Activated CD4-positive, alpha-beta memory T cell treated with anti-CD3 and anti-CD28 coated beads for 36 hours (primary cell): ENCODE measurements at regions of chr6 and their contacts with region 1.

Region 1: GRCh38 chr6:16420715-16421461 is 182.5 kb downstream of the GMPR start:
- DNase-seq: peak; percentile 74
- H3K4me3 Mint-ChIP-seq: peak overlapping the region; percentile 62
- H3K27ac Mint-ChIP-seq: peak overlapping the region; percentile 96
- H3K4me1 Mint-ChIP-seq: peaks cover 69% of the 10 kb centered on the region
- H3K27me3 Mint-ChIP-seq: no peaks in the 10 kb centered on the region

Region 2: DNA sequence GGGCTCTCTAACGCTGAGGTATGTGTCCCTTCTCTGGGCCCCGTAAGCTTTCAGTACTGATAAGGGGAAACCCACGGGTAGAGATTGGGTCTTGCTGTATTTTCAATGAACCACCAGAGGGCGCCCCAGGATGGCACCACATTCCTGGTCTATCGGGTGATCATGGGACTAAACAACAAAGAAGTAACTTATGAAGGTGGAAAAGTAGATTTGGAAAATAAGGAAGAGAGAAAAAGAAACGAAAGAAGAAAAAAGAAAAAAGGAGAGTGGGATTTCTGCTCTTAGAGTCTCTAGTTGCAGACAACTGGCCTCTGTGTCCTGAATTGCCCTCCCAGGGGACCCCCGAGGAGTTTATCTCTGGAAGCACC is 88.7 kb before region 1 on chr6:
- CTCF ChIA-PET with region 1: interaction called, 5 read pairs
- POLR2A ChIA-PET with region 1: no interaction called
- intact Hi-C with region 1: loop called (anchors 1 kb)
- DNase-seq: peak; percentile 91
- H3K4me3 Mint-ChIP-seq: no peak overlapping the region
- H3K27ac Mint-ChIP-seq: no peak overlapping the region
- H3K4me1 Mint-ChIP-seq: peaks cover 9% of the 10 kb centered on the region
- H3K27me3 Mint-ChIP-seq: no peaks in the 10 kb centered on the region

Region 3: DNA sequence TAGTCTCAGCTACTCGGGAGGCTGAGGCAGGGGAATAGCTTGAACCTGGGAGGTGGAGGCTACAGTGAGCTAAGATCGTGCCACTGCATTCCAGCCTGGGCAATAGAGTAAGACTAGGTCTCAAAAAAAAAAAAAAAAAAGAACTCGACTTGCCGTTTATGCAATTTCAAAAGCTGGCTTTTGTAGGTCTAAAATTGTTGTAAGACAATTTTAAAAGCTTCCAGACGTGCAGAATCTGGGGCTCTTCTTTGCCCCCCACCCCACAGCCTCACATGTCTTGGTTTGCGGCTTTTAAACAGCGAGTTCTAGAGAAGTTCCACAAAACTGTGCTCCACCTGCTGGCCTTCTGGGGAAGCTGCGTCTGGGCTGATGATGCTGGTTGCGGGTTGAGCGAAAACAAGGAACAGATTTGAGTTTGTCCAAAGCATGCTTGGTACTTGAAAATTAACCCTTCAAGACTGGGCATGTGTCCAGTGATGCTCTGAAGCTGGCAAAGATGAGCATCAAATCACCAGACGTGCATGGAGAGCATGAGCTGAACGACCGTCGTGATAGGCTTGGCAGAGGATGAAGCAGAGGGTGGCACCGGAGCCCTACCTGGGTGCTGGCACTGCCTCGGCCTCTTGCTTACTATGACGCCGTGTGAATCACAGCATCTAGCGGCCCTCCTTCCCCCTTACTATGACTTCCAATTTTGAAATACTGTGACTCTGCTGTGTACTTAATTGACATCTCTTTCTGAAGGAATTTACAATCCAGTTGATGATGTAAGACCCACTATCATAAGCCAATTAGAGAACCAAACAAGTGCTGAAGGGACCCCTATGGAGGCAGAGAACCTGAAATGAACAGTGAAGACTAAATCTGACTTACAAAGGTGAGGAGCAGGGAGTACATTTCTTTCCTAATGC is 11.1 kb before region 1 on chr6:
- CTCF ChIA-PET with region 1: interaction called, 6 read pairs
- POLR2A ChIA-PET with region 1: interaction called, 10 read pairs
- intact Hi-C with region 1: loop called (anchors 1 kb)
- DNase-seq: peak; percentile 82
- H3K4me3 Mint-ChIP-seq: peak overlapping the region; percentile 71
- H3K27ac Mint-ChIP-seq: peak overlapping the region; percentile 81
- H3K4me1 Mint-ChIP-seq: peaks cover 66% of the 10 kb centered on the region
- H3K27me3 Mint-ChIP-seq: no peaks in the 10 kb centered on the region

Region 4: DNA sequence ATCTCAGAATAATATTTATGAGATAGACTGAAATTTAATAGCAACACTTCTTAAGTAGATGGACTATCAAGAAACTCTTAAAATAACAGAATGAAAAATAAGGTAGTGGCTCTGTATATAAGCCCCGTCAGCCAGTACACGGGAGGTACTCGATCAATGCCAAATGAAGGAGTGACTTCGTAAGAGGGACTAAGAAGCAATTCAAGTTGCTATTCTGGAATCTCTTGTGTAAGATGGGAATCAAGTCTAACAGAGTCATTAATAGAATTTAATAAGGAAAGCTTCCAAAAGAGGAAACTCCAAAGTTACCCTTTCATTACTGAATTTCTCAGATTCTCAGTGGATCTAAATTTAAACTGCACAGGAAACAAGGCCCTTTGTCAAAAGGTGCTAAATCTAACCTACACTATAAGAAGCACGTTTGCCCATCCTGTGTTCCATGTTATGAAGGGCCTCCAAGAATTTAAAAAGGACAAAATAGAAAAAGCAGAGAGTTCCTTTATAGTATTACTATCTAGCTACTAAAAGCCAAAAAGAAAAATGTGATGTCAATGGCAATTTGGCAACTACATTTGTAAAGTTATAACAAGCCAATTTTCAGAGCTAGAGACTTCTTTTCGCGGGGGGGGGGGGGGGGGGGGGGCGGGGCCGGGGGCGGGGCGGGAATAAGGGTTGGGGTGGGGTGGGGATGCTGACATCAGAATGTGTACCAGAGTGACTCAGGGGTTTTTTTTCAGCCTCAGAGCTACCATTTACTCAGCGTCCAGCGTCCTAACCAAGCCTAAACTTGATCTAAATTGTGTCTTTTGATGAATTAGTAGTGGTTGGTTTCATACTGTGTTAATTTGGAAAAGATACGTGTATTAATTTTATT is 18.1 kb after region 1 on chr6:
- CTCF ChIA-PET with region 1: interaction called, 5 read pairs
- POLR2A ChIA-PET with region 1: interaction called, 80 read pairs
- intact Hi-C with region 1: loop called (anchors 1 kb)
- DNase-seq: peak; percentile 62
- H3K4me3 Mint-ChIP-seq: peak overlapping the region; percentile 98
- H3K27ac Mint-ChIP-seq: peak overlapping the region; percentile 100
- H3K4me1 Mint-ChIP-seq: peaks cover 69% of the 10 kb centered on the region
- H3K27me3 Mint-ChIP-seq: no peaks in the 10 kb centered on the region

Region 5: GRCh38 chr6:16481697-16482399 is 61.0 kb after region 1 on chr6:
- CTCF ChIA-PET with region 1: interaction called, 3 read pairs
- POLR2A ChIA-PET with region 1: interaction called, 5 read pairs
- intact Hi-C with region 1: loop called (anchors 1 kb)
- DNase-seq: peak; percentile 76
- H3K4me3 Mint-ChIP-seq: peak overlapping the region; percentile 47
- H3K27ac Mint-ChIP-seq: peak overlapping the region; percentile 87
- H3K4me1 Mint-ChIP-seq: peaks cover 93% of the 10 kb centered on the region
- H3K27me3 Mint-ChIP-seq: no peaks in the 10 kb centered on the region

Region 6: DNA sequence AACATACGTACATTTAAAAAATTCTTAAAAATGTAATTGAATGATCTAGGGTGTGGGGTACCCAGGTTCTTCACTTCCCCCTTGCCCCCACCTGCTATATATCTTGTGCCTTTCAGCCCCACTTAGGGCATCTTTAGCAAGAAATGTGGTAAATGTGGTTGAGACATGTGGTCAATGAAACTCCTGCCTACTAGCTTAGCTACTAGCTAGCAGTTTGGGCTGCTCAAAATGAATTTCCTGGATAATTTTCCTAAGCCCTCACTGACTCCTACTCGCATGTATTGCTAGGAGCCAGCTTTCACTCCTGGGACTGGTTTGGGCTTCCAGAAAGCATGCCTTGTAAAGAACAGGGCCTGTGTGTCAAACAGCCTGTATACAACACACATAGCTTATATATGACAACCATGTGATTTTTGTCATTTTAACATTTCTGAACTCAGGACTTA is 83.1 kb after region 1 on chr6:
- CTCF ChIA-PET with region 1: no interaction called
- POLR2A ChIA-PET with region 1: no interaction called
- intact Hi-C with region 1: no loop called
- DNase-seq: no peak
- H3K4me3 Mint-ChIP-seq: no peak overlapping the region
- H3K27ac Mint-ChIP-seq: no peak overlapping the region
- H3K4me1 Mint-ChIP-seq: peaks cover 47% of the 10 kb centered on the region
- H3K27me3 Mint-ChIP-seq: no peaks in the 10 kb centered on the region

Region 7: DNA sequence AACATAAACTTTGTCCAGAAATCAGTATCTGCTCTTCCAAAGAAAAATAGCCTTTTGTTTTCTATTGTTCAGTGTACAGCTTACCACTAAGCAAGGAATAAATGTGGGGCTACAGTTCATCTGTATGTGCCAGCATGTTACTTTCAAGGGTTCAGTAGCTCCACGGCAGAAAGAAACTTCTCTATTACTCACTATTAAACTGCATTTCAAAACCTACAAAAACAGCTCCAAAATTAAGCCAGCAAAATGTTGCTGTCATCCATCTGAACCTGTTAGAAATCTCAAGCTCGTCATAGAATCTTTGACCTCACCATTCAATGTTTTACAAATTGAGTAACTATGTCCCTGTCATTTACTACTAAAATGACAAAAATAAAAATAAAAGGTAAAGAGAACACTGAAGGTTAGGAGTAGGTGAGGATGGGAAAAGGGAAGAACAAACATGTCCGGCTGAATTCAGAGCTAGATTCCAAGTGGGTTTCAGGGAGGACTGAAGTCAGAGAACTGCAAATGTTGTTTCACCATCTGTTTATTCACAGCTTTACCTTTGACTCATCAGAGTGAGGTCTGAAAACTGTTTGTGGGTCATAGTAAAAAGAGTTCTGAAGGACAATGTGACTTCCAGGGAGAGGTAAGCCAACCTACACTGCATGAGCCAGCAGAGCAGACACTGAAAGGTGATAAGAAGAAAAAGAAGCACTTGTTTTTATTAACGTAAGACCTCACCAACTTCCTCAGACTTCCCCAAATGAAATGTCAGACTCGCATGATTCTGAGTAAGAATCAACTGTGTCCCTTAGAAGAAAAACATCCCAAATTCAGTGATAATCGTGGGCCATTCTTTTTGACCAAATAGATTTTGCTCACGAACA is 278.3 kb after region 1 on chr6:
- CTCF ChIA-PET with region 1: interaction called, 3 read pairs
- POLR2A ChIA-PET with region 1: interaction called, 6 read pairs
- intact Hi-C with region 1: loop called (anchors 2 kb)
- DNase-seq: peak; percentile 53
- H3K4me3 Mint-ChIP-seq: peak overlapping the region; percentile 78
- H3K27ac Mint-ChIP-seq: peak overlapping the region; percentile 89
- H3K4me1 Mint-ChIP-seq: peaks cover 75% of the 10 kb centered on the region
- H3K27me3 Mint-ChIP-seq: no peaks in the 10 kb centered on the region